HepG2 (cell line): ENCODE measurements at regions of chr16 and their contacts with region 1.

Region 1: DNA sequence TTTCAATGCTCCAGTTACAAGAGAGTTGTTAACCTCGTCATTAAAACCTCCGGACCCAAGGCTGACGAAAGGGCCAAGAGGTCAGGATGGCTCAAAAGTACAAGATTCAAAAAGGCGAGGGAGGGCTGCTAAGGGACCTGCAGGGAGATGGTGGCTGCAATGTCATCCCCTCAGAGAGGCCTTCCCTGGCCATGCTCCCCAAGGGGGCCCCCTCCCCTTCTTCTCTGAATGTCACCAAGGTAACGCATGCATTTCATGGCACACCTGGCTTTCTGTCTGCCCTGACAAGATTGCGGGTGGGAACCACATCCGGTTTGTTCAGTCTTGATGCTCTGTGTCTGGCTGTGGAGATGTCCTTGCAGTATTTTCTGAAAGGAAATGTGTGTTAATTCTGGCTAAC is 89.9 kb downstream of the C16orf78 start:
- DNase-seq: no peak
- ATAC-seq: no peak
- H3K4me3 ChIP-seq: no peak overlapping the region
- H3K27ac ChIP-seq: no peak overlapping the region
- H3K4me1 ChIP-seq: no peaks in the 10 kb centered on the region
- H3K27me3 ChIP-seq: peaks cover 0 to 2% of the 10 kb centered on the region in 2 experiments; a peak in 2 of 5 replicates
- CTCF ChIP-seq: no peak
- EP300 ChIP-seq: no peak
- POLR2A ChIP-seq: no peak
- RAD21 ChIP-seq: no peak

Region 2: GRCh38 chr16:49407873-49408550 is 55.5 kb before region 1 on chr16:
- CTCF ChIA-PET with region 1: no interaction called
- POLR2A ChIA-PET with region 1: no interaction called
- in situ Hi-C with region 1: loop called (anchors 5 kb)
- intact Hi-C with region 1: no loop called
- DNase-seq: peak; percentile 76
- ATAC-seq: peak; percentile 99
- H3K4me3 ChIP-seq: no peak overlapping the region
- H3K27ac ChIP-seq: no peak overlapping the region
- H3K4me1 ChIP-seq: no peaks in the 10 kb centered on the region
- H3K27me3 ChIP-seq: no peaks in the 10 kb centered on the region
- CTCF ChIP-seq: peak; percentile 98
- EP300 ChIP-seq: no peak
- POLR2A ChIP-seq: no peak
- RAD21 ChIP-seq: peak; percentile 93

Region 3: DNA sequence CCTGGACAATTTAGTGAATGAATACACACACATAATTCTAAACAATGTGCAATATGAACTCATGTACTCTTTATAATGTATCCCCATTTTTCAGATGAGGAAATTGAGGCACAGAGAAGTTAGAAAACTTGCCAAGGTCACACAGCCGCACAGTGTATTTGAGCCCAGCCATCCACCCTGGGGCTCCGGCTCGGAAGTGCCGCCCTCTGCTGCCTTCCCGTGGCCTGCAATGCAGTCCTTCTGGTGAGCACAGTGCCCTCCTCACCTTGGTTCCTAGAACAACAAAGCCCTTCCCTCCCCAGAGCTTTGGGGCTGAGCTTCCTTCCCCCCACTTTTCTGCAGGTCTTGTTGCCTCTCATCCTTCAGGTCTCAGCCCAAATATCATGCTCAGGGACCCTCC is 26.2 kb before region 1 on chr16:
- CTCF ChIA-PET with region 1: no interaction called
- POLR2A ChIA-PET with region 1: no interaction called
- in situ Hi-C with region 1: no loop called
- intact Hi-C with region 1: no loop called
- DNase-seq: no peak
- ATAC-seq: peak; percentile 60
- H3K4me3 ChIP-seq: no peak overlapping the region
- H3K27ac ChIP-seq: no peak overlapping the region
- H3K4me1 ChIP-seq: no peaks in the 10 kb centered on the region
- H3K27me3 ChIP-seq: peaks cover 0 to 31% of the 10 kb centered on the region in 2 experiments; a peak in 3 of 5 replicates
- CTCF ChIP-seq: peak; percentile 23; the same call in 1 of the 2 replicates
- EP300 ChIP-seq: no peak
- POLR2A ChIP-seq: no peak
- RAD21 ChIP-seq: no peak

Region 4: DNA sequence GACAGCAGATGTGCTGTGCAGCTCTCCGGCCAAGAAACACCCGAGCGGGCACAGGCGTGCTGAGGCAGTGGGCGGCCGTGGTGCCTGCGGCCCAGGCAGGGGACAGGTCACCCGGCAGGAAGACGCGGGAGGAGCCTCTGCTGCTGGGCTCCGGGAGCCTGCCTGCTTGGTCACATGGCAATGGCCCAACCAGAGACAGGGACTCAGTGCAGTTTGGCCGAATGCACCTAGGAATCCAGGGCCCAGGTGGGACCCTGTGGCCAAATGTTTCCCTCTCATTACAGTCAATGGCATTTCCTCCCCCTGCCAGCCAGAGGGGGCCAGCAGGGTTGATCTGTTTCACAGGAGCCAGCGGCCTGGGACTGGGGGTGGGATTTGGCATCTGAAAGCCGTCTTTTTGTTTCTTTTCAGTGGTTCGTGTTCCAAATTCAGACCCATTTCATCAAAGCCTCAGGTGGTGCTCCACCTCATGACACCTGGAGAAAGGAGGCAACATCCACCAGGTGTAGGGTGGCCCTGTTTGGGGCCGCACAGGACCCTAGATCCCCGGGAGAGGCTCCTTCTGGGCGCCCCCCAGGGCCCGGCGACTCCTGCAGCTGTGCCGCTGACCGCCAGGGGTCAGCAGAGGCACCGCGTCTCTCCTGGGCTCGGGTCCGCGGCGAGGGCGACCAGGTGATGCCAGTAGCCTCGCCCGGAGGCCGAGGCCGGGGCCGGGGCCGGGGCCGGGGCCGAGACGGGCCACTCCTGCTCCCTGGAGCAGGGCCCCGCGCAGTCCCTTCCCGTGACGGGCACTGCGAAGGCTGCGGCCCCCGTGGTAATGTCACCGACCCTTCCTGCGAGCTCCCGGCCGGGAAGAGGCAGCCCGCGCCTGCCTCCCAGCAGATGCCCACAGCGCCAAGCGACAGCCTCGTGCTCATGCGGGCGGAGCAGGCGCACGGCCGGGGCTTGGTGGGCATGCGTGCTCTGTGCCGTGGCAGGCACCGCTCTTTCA is 28.5 kb after region 1 on chr16:
- CTCF ChIA-PET with region 1: no interaction called
- POLR2A ChIA-PET with region 1: no interaction called
- in situ Hi-C with region 1: no loop called
- intact Hi-C with region 1: no loop called
- DNase-seq: no peak
- ATAC-seq: peak; percentile 92
- H3K4me3 ChIP-seq: no peak overlapping the region
- H3K27ac ChIP-seq: no peak overlapping the region
- H3K4me1 ChIP-seq: no peaks in the 10 kb centered on the region
- H3K27me3 ChIP-seq: peaks cover 0 to 11% of the 10 kb centered on the region in 2 experiments; a peak in 2 of 5 replicates
- CTCF ChIP-seq: peak; percentile 83
- EP300 ChIP-seq: no peak
- POLR2A ChIP-seq: no peak
- RAD21 ChIP-seq: peak; percentile 62

Region 5: DNA sequence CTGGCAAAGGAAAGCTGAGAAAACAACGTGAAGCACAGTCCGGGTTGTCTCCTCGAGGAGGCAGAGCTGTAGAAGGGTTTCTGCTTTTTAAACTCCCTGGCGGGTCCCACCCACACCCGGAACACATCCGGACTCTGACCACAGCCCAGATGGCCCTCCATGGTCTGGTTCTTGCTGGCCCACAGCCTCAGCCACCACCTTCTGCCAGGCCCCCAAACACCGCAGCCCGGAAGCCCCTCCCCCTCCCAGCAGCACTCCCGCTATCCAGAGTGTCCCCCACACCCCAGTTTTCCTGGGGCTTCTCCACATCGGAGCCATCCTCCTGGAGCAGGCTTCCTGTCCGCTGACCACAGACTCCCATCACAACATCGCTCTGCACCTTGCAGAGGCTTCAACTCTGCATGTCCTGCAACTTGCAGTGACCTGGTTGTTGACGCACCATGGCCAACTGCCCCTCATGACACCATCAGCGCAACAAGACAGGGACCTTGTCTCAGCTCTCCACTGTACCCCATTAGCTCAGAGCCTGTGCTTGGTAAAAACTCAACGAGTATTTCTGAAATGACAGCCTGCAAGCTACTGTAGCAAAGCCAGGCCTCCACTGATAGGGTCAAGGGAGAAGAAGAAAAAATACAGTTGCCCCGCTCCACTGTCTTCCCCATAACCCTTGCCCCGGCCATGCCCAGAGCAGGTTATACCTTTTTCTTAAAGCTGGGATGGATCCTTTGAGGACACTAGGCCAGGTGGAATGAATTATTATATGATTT is 39.9 kb after region 1 on chr16:
- CTCF ChIA-PET with region 1: no interaction called
- POLR2A ChIA-PET with region 1: no interaction called
- in situ Hi-C with region 1: no loop called
- intact Hi-C with region 1: no loop called
- DNase-seq: no peak
- ATAC-seq: peak; percentile 60
- H3K4me3 ChIP-seq: peak overlapping the region in 2 of 3 experiments; percentile 4 to 16; a peak in 1 of 6 replicates
- H3K27ac ChIP-seq: no peak overlapping the region
- H3K4me1 ChIP-seq: peaks cover 22% of the 10 kb centered on the region
- H3K27me3 ChIP-seq: no peaks in the 10 kb centered on the region; a peak in 2 of 5 replicates
- CTCF ChIP-seq: no peak
- EP300 ChIP-seq: no peak
- POLR2A ChIP-seq: no peak
- RAD21 ChIP-seq: no peak